Activated T-helper 1 cell treated with anti-CD3 and anti-CD28 coated beads, Interleukin-12 subunit alpha, Interleukin-12 subunit beta, Interleukin-2, Interleukin-4 antibody, amounts not matched to agents 30 ng/mL and 10 ng/mL and 1 ng/mL, durations not matched to agents 14 hours and 24 hours and 36 hours (primary cell): ENCODE measurements at regions of chr17 and their contacts with region 1.

Region 1: DNA sequence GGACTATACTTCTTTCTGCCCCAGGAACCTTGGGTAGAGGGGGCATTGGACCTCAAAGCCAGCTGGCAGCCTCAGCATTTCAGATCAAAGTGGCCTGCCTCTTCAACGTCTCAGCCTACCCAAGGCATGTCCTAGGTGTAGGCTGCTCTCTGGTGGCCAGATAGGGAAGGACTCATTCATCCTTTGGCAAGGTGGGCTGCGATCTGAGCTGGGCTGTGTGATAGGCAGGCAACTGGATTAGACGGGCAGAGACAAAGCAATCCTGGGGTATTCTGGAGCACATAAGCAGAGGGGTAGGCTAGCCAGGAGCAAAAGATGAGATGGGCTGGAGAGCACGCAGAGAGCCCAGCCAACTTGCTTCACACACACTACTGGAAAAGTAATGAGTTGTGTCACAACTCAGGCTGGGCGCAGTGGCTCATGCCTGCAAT is 8.8 kb upstream of the NAGLU start:
- DNase-seq: peak; percentile 51
- H3K4me3 Mint-ChIP-seq: no peak overlapping the region
- H3K27ac Mint-ChIP-seq: no peak overlapping the region
- H3K4me1 Mint-ChIP-seq: peaks cover 24% of the 10 kb centered on the region
- H3K27me3 Mint-ChIP-seq: peaks cover 9% of the 10 kb centered on the region

Region 2: GRCh38 chr17:42428141-42428944 is 98.9 kb before region 1 on chr17:
- intact Hi-C with region 1: loop called (anchors 1 kb)
- DNase-seq: peak; percentile 16
- H3K4me3 Mint-ChIP-seq: no peak overlapping the region
- H3K27ac Mint-ChIP-seq: no peak overlapping the region
- H3K4me1 Mint-ChIP-seq: no peaks in the 10 kb centered on the region
- H3K27me3 Mint-ChIP-seq: peaks cover 50% of the 10 kb centered on the region

Region 3: DNA sequence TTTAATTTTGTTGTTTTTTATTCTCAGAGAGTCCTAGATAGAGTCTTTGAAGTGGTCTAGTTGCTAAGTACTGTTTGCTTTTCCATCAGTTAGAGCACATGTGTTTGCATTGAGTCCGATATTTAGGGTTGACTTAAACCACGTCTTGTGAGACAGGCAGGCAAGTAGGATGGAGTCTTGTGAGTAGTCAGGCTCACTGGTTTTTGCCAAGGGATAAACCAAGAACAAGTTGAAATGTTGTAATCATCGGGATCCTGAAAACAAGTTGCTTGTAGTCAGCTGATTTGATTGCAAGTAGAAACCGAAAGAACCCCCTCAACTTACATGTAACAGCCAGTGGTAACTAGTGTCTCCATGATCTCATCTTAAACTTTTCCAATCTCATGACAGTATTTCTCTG is 51.5 kb before region 1 on chr17:
- intact Hi-C with region 1: no loop called
- DNase-seq: no peak
- H3K4me3 Mint-ChIP-seq: no peak overlapping the region
- H3K27ac Mint-ChIP-seq: no peak overlapping the region
- H3K4me1 Mint-ChIP-seq: peaks cover 18% of the 10 kb centered on the region
- H3K27me3 Mint-ChIP-seq: no peaks in the 10 kb centered on the region